CD4-positive, alpha-beta T cell (primary cell): ENCODE measurements at regions of chr1 and their contacts with region 1.

Region 1: GRCh38 chr1:24502709-24503058 is at the start of gene RCAN3:
- DNase-seq: peak; percentile 74 to 96 (median 87)
- ATAC-seq: peak; percentile 54
- H3K4me3 ChIP-seq: peak within 1 kb of the TSS; percentile 90
- H3K4me3 Mint-ChIP-seq: peak within 1 kb of the TSS; percentile 98
- H3K27ac ChIP-seq: peak within 1 kb of the TSS; percentile 95 to 97
- H3K27ac Mint-ChIP-seq: peak within 1 kb of the TSS; percentile 96
- H3K4me1 ChIP-seq: peaks cover 56% of the 10 kb centered on the region
- H3K4me1 Mint-ChIP-seq: peaks cover 69% of the 10 kb centered on the region
- H3K27me3 ChIP-seq: no peaks in the 10 kb centered on the region
- H3K27me3 Mint-ChIP-seq: no peaks in the 10 kb centered on the region
- CTCF ChIP-seq: no peak
- total RNA-seq, gene RCAN3: 185 to 191 TPM

Region 2: DNA sequence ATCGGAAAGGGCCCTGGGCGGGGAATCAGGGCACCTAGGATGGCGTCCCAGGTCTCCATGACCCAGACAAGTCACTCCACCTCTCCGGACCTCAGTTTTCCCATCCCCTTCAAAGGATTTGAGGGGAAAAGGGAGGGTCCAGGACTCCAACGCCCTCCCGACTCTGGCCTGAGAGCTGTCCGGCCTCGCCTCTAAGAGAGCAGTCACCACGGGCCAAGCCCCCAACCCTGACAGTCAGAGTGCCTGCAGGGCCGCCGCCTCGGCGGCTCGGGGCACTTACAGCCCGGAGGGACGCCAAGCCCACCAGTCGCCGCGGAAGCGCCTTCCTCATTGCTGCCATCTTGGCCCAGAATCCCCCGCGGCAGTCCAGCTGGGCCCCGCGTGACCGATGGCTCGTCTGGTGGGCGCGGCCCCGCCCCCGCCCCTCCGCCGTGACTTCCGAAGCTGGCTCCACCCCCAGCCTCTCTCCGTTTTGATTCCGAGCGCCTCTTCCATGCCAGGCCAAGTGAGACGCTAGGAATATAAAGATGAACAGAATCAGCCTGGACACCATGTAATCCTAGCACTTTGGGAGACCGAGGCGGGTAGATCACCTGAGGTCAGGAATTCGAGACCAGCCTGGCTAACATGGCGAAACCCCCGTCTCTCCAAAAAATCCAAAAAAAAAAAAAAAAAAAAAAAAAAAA is 677.5 kb before region 1 on chr1 and contains the start of gene HMGCL:
- CTCF ChIA-PET with region 1: no interaction called
- POLR2A ChIA-PET with region 1: no interaction called
- intact Hi-C with region 1: no loop called
- DNase-seq: peak; percentile 72 to 94 (median 83)
- ATAC-seq: peak; percentile 94
- H3K4me3 ChIP-seq: peak within 1 kb of the TSS; percentile 93
- H3K4me3 Mint-ChIP-seq: peak within 1 kb of the TSS; percentile 96
- H3K27ac ChIP-seq: peak within 1 kb of the TSS; percentile 84 to 92
- H3K27ac Mint-ChIP-seq: peak within 1 kb of the TSS; percentile 96
- H3K4me1 ChIP-seq: peaks cover 15% of the 10 kb centered on the region
- H3K4me1 Mint-ChIP-seq: peaks cover 20% of the 10 kb centered on the region
- H3K27me3 ChIP-seq: no peaks in the 10 kb centered on the region
- H3K27me3 Mint-ChIP-seq: no peaks in the 10 kb centered on the region
- CTCF ChIP-seq: no peak
- total RNA-seq, gene HMGCL: 8.9 to 9.6 TPM

Region 3: GRCh38 chr1:24415334-24415909 is 87.3 kb before region 1 on chr1 and contains the start of gene NIPAL3:
- CTCF ChIA-PET with region 1: interaction called, 25 read pairs
- POLR2A ChIA-PET with region 1: interaction called, 205 read pairs
- intact Hi-C with region 1: loop called (anchors 1 to 5 kb)
- DNase-seq: peak; percentile 92 to 99 (median 96)
- ATAC-seq: peak; percentile 94
- H3K4me3 ChIP-seq: peak within 1 kb of the TSS; percentile 82
- H3K4me3 Mint-ChIP-seq: peak within 1 kb of the TSS; percentile 97
- H3K27ac ChIP-seq: peak within 1 kb of the TSS; percentile 44 to 50
- H3K27ac Mint-ChIP-seq: peak within 1 kb of the TSS; percentile 91
- H3K4me1 ChIP-seq: peaks cover 61% of the 10 kb centered on the region
- H3K4me1 Mint-ChIP-seq: peaks cover 79% of the 10 kb centered on the region
- H3K27me3 ChIP-seq: no peaks in the 10 kb centered on the region
- H3K27me3 Mint-ChIP-seq: no peaks in the 10 kb centered on the region
- CTCF ChIP-seq: peak; percentile 87
- total RNA-seq, gene NIPAL3: 26.3 to 29.8 TPM

Region 4: GRCh38 chr1:24472527-24473251 is 30.0 kb before region 1 on chr1:
- CTCF ChIA-PET with region 1: interaction called, 3 read pairs
- POLR2A ChIA-PET with region 1: interaction called, 57 read pairs
- intact Hi-C with region 1: loop called in 1 of 2 experiments (anchors 5 kb)
- DNase-seq: no peak
- ATAC-seq: no peak
- H3K4me3 ChIP-seq: no peak overlapping the region
- H3K4me3 Mint-ChIP-seq: no peak overlapping the region
- H3K27ac ChIP-seq: no peak overlapping the region
- H3K27ac Mint-ChIP-seq: peak overlapping the region; percentile 55
- H3K4me1 ChIP-seq: peaks cover 2% of the 10 kb centered on the region
- H3K4me1 Mint-ChIP-seq: peaks cover 51% of the 10 kb centered on the region
- H3K27me3 ChIP-seq: no peaks in the 10 kb centered on the region
- H3K27me3 Mint-ChIP-seq: no peaks in the 10 kb centered on the region
- CTCF ChIP-seq: no peak

Region 5: DNA sequence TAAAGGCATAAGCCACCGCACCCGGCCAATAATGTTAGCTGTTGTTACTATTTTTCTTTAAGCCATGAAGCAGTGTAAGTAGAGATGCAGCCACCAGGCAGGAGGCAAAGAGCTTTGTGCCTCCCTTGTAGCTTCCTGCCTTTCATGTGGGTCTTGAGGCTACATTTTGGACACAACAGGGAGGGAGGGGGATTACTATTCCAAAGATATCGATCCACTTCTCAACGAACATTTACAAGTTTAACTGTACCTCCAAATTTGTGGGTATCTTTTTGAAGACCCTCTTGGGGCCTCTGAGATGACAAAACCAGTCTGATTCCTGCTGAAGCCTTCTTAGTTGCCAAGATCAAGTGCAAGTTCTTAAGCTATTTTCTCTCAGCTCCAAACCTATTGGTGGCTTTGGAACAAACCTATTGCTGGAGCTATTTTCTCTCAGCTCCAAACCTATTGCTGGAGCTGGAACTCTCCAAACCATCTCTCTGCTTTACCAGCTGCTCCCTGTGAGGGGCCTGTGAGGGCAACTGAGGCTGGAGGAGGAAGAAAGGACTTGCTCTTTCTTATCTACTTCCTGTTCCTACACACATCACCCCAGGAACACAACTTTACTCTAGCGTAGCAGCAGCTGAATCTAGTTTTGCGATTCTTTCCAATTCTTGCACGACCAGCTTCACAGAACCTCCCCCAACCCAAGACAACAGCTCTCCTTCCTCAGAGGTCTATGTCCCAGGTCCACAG is 16.2 kb before region 1 on chr1:
- CTCF ChIA-PET with region 1: interaction called, 13 read pairs
- POLR2A ChIA-PET with region 1: interaction called, 692 read pairs
- intact Hi-C with region 1: loop called (anchors 1 kb)
- DNase-seq: peak in 12 of 14 experiments; percentile 24 to 84 (median 38)
- ATAC-seq: peak; percentile 46
- H3K4me3 ChIP-seq: peak overlapping the region; percentile 12
- H3K4me3 Mint-ChIP-seq: peak overlapping the region; percentile 77
- H3K27ac ChIP-seq: peak overlapping the region; percentile 43 to 68
- H3K27ac Mint-ChIP-seq: peak overlapping the region; percentile 98
- H3K4me1 ChIP-seq: peaks cover 78% of the 10 kb centered on the region
- H3K4me1 Mint-ChIP-seq: peaks cover 77% of the 10 kb centered on the region
- H3K27me3 ChIP-seq: no peaks in the 10 kb centered on the region
- H3K27me3 Mint-ChIP-seq: no peaks in the 10 kb centered on the region
- CTCF ChIP-seq: peak; percentile 7

Region 6: DNA sequence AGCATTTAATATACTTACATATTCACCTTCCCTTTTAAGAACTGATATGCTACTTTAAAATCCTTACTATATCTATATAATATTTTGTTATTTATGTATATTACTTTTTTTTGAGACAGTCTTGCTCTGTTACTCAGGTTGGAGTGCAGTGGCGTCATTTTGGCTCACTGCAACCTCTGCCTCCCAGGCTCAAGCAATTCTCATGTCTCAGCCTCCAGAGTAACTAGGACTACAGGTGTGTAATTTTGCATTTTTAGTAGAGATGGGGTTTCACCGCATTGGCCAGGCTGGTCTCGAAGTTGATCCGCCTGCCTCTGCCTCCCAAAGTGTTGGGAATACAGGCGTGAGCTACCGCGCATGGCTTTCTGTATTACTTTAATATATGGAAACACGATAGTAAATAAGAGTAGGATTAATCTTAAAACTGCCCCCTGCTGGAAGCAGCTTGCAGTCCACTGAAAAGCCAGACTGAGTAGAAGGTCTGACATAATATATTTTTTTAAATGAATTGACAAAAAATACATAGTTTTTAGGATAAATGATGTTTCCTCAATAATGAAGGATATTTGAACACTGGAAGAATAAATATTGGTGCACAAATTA is 24.4 kb after region 1 on chr1:
- CTCF ChIA-PET with region 1: interaction called, 13 read pairs
- POLR2A ChIA-PET with region 1: interaction called, 42 read pairs
- intact Hi-C with region 1: loop called in 1 of 2 experiments (anchors 1 kb)
- DNase-seq: peak in 13 of 14 experiments; percentile 22 to 75 (median 42)
- ATAC-seq: peak; percentile 78
- H3K4me3 ChIP-seq: no peak overlapping the region
- H3K4me3 Mint-ChIP-seq: peak overlapping the region; percentile 45
- H3K27ac ChIP-seq: no peak overlapping the region
- H3K27ac Mint-ChIP-seq: peak overlapping the region; percentile 64
- H3K4me1 ChIP-seq: peaks cover 49% of the 10 kb centered on the region
- H3K4me1 Mint-ChIP-seq: peaks cover 76% of the 10 kb centered on the region
- H3K27me3 ChIP-seq: no peaks in the 10 kb centered on the region
- H3K27me3 Mint-ChIP-seq: no peaks in the 10 kb centered on the region
- CTCF ChIP-seq: peak; percentile 78

Region 7: GRCh38 chr1:24541711-24542346 is 39.1 kb after region 1 on chr1:
- CTCF ChIA-PET with region 1: interaction called, 3 read pairs
- POLR2A ChIA-PET with region 1: interaction called, 62 read pairs
- intact Hi-C with region 1: no loop called
- DNase-seq: peak in 5 of 14 experiments; percentile 19 to 59 (median 45)
- ATAC-seq: no peak
- H3K4me3 ChIP-seq: no peak overlapping the region
- H3K4me3 Mint-ChIP-seq: peak overlapping the region; percentile 15
- H3K27ac ChIP-seq: no peak overlapping the region
- H3K27ac Mint-ChIP-seq: peak overlapping the region; percentile 87
- H3K4me1 ChIP-seq: peaks cover 22% of the 10 kb centered on the region
- H3K4me1 Mint-ChIP-seq: peaks cover 74% of the 10 kb centered on the region
- H3K27me3 ChIP-seq: no peaks in the 10 kb centered on the region
- H3K27me3 Mint-ChIP-seq: no peaks in the 10 kb centered on the region
- CTCF ChIP-seq: peak; percentile 60

Region 8: GRCh38 chr1:24642481-24643361 is 140.0 kb after region 1 on chr1 and contains the start of gene SRRM1:
- CTCF ChIA-PET with region 1: no interaction called
- POLR2A ChIA-PET with region 1: interaction called, 11 read pairs
- intact Hi-C with region 1: loop called (anchors 1 to 5 kb)
- DNase-seq: peak; percentile 96 to 100 (median 98)
- ATAC-seq: peak; percentile 87
- H3K4me3 ChIP-seq: peak within 1 kb of the TSS; percentile 89
- H3K4me3 Mint-ChIP-seq: peak within 1 kb of the TSS; percentile 90
- H3K27ac ChIP-seq: peak within 1 kb of the TSS; percentile 99
- H3K27ac Mint-ChIP-seq: peak within 1 kb of the TSS; percentile 96
- H3K4me1 ChIP-seq: peaks cover 26% of the 10 kb centered on the region
- H3K4me1 Mint-ChIP-seq: peaks cover 55% of the 10 kb centered on the region
- H3K27me3 ChIP-seq: no peaks in the 10 kb centered on the region
- H3K27me3 Mint-ChIP-seq: no peaks in the 10 kb centered on the region
- CTCF ChIP-seq: no peak
- total RNA-seq, gene SRRM1: 338 to 360 TPM